Mammary epithelial cell (primary cell): ENCODE measurements at regions of chr1 and their contacts with region 1.

Region 1: DNA sequence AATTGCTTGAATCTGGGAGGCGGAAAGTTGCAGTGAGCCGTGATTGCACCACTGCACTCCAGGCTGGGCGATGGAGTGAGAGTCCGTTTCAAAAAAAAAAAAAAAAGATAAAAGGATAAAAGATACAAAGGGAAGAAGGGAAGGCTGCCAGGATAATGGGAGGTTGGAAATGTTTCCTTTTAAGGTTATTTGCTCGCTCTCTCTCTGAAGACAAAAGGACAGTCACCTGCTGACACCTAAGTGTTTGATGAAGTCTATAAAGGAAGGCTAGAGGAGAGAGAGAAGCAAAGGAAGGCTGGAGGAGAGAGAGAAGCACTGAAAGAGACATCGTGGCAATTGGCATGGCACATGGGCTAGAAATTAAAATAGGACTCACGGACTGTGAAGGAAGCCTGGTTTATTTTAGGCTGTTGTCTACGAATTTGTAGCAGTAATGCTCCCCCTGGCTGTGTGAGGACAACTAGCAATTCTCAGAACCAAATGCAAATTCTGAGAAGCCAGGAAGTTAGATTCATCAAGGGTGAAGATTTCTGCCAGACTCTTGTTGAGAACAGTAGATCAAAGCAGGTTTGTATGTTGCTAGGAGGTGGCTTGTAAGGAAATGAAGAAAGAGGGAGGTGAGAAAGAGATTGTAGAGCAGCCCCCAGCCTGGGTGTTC is 154.2 kb downstream of the ZP4 start:
- DNase-seq: peak; percentile 16
- H3K4me3 ChIP-seq: no peak overlapping the region
- H3K27ac ChIP-seq: no peak overlapping the region
- H3K4me1 ChIP-seq: no peaks in the 10 kb centered on the region
- H3K27me3 ChIP-seq: no peaks in the 10 kb centered on the region
- CTCF ChIP-seq: peak; percentile 34 to 48

Region 2: DNA sequence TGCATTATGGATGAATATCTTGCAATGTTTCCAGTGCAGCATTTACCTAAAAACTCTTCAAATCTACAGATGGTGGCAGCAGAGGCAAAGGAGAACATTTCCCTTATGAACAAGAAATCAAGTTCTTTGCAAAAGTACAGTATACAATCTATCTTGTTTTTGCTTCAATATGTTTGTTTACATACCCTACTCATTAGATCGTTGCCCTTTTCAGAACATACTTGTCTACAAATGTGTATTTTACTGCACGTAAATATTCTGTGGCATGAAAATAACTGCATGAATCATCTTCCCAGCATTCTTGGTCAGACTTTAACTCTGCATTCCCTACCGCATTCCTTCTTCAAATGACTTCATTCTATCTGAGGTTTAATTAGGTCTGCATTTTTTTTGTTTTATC is 58.5 kb before region 1 on chr1:
- CTCF ChIA-PET with region 1: no interaction called
- dilution Hi-C with region 1: loop called (anchors 5 kb)
- in situ Hi-C with region 1: no loop called
- intact Hi-C with region 1: loop called (anchors 5 kb)
- DNase-seq: peak; percentile 31
- H3K4me3 ChIP-seq: no peak overlapping the region
- H3K27ac ChIP-seq: no peak overlapping the region
- H3K4me1 ChIP-seq: no peaks in the 10 kb centered on the region
- H3K27me3 ChIP-seq: no peaks in the 10 kb centered on the region
- CTCF ChIP-seq: peak in 1 of 2 donors; percentile 45

Region 3: GRCh38 chr1:237684236-237684635 is 52.3 kb before region 1 on chr1:
- CTCF ChIA-PET with region 1: no interaction called
- dilution Hi-C with region 1: loop called (anchors 5 kb)
- in situ Hi-C with region 1: no loop called
- intact Hi-C with region 1: loop called (anchors 5 kb)
- DNase-seq: peak; percentile 20
- H3K4me3 ChIP-seq: no peak overlapping the region
- H3K27ac ChIP-seq: no peak overlapping the region
- H3K4me1 ChIP-seq: no peaks in the 10 kb centered on the region
- H3K27me3 ChIP-seq: no peaks in the 10 kb centered on the region
- CTCF ChIP-seq: no peak